ENCODE measurements at regions of chr10 and their contacts with region 1.

Region 1: GRCh38 chr10:69087590-69088470 is at the start of gene SRGN:
- DNase-seq: peak; percentile 81
- H3K4me3 Mint-ChIP-seq: peak within 1 kb of the TSS; percentile 92
- H3K27ac Mint-ChIP-seq: peak within 1 kb of the TSS; percentile 93
- H3K4me1 Mint-ChIP-seq: peaks cover 52% of the 10 kb centered on the region
- H3K27me3 Mint-ChIP-seq: no peaks in the 10 kb centered on the region
- total RNA-seq, gene SRGN: 1,217 and 1,242 TPM in 2 replicates

Region 2: GRCh38 chr10:68988530-68989316 is 99.1 kb before region 1 on chr10 and contains the start of gene KIFBP:
- intact Hi-C with region 1: loop called (anchors 1 kb)
- DNase-seq: peak; percentile 84
- H3K4me3 Mint-ChIP-seq: peak within 1 kb of the TSS; percentile 93
- H3K27ac Mint-ChIP-seq: peak within 1 kb of the TSS; percentile 87
- H3K4me1 Mint-ChIP-seq: peaks cover 34% of the 10 kb centered on the region
- H3K27me3 Mint-ChIP-seq: no peaks in the 10 kb centered on the region
- total RNA-seq, gene KIFBP: 16.4 and 16.9 TPM in 2 replicates

Region 3: GRCh38 chr10:69045441-69046300 is 42.2 kb before region 1 on chr10:
- intact Hi-C with region 1: loop called (anchors 1 kb)
- DNase-seq: peak; percentile 42
- H3K4me3 Mint-ChIP-seq: peak overlapping the region; percentile 76
- H3K27ac Mint-ChIP-seq: peak overlapping the region; percentile 99
- H3K4me1 Mint-ChIP-seq: peaks cover 54% of the 10 kb centered on the region
- H3K27me3 Mint-ChIP-seq: no peaks in the 10 kb centered on the region

Region 4: DNA sequence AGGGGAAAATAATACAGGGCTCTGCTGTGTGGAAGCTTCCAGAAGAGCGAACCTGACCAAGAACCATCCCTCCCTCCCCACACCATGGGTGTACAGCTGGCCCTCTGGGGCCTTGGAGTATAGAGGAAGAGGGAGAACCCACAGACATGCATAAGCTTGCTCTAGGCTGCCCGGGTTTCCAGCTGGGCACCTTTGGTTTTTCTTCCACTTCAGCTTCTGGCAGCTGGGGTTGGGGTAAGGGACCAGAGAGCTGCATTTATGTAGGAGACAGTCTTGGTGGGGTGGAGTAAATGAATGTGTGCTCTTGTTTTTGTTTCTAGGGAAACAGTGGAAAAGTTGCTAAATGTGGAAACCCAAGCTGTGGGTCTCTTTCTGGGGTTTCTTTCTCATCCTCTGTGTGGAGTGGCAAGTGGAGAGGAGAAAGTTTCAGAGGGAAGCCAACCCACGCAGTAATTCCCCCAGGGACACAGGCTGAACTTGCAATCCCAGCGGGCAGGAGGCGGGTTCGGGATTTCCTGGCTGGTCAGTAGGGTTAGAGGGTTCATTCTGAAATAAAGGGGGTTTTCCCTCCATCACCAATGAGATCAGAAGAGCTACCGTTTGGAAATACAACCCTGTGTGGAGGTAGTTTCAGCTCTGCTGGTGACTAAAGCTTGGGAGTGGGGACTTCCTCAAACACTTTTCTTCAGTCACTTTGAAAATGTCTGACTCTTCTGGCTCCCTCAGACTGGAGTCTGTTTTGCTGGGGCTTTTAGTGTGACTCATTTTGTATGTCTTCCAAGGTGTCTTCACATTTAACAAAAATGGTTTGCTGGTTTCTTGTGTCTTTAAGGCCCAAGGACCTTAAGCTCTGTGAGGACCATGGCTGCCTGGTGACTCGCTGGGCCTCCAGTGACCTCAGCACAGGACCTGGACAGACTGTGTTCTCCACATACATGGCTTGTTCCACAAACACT is 22.1 kb before region 1 on chr10:
- intact Hi-C with region 1: loop called (anchors 1 kb)
- DNase-seq: peak; percentile 39
- H3K4me3 Mint-ChIP-seq: peak overlapping the region; percentile 62
- H3K27ac Mint-ChIP-seq: peak overlapping the region; percentile 99
- H3K4me1 Mint-ChIP-seq: peaks cover 51% of the 10 kb centered on the region
- H3K27me3 Mint-ChIP-seq: no peaks in the 10 kb centered on the region